Activated CD8-positive, alpha-beta T cell treated with anti-CD3 and anti-CD28 coated beads, Interleukin-2, amount 10 ng/mL, durations not matched to agents 7 days and 5 days (primary cell): ENCODE measurements at regions of chr19 and their contacts with region 1.

Region 1: DNA sequence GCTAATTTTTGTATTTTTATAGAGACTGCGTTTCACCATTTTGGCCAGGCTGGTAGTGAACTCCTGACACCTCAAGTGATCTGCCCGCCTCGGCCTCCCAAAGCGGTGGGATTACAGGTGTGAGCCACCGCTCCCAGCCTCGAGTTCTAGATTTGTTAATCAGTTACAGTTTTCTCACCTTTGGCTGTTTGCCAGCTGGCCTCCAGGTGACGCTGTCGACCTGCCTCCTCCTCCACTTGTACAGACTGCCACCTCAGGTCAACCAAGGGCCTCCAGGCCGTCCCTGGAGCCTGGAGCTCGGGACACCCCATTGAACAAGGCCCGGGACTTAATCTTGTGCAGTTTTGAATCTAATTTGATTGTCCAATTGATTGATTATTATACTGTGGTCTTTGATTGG is 45.5 kb downstream of the IER2 start:
- DNase-seq: peak; percentile 61
- ATAC-seq: peak; percentile 57
- H3K4me3 Mint-ChIP-seq: no peak overlapping the region
- H3K27ac Mint-ChIP-seq: no peak overlapping the region
- H3K4me1 Mint-ChIP-seq: peaks cover 29% of the 10 kb centered on the region
- H3K27me3 Mint-ChIP-seq: no peaks in the 10 kb centered on the region

Region 2: GRCh38 chr19:13155472-13156359 is 40.0 kb before region 1 on chr19:
- CTCF ChIA-PET with region 1: interaction called, 32 read pairs
- POLR2A ChIA-PET with region 1: interaction called, 6 read pairs
- DNase-seq: peak; percentile 86
- ATAC-seq: peak; percentile 10
- H3K4me3 Mint-ChIP-seq: peak overlapping the region; percentile 99
- H3K27ac Mint-ChIP-seq: peak overlapping the region; percentile 94
- H3K4me1 Mint-ChIP-seq: peaks cover 50% of the 10 kb centered on the region
- H3K27me3 Mint-ChIP-seq: peaks cover 2% of the 10 kb centered on the region

Region 3: DNA sequence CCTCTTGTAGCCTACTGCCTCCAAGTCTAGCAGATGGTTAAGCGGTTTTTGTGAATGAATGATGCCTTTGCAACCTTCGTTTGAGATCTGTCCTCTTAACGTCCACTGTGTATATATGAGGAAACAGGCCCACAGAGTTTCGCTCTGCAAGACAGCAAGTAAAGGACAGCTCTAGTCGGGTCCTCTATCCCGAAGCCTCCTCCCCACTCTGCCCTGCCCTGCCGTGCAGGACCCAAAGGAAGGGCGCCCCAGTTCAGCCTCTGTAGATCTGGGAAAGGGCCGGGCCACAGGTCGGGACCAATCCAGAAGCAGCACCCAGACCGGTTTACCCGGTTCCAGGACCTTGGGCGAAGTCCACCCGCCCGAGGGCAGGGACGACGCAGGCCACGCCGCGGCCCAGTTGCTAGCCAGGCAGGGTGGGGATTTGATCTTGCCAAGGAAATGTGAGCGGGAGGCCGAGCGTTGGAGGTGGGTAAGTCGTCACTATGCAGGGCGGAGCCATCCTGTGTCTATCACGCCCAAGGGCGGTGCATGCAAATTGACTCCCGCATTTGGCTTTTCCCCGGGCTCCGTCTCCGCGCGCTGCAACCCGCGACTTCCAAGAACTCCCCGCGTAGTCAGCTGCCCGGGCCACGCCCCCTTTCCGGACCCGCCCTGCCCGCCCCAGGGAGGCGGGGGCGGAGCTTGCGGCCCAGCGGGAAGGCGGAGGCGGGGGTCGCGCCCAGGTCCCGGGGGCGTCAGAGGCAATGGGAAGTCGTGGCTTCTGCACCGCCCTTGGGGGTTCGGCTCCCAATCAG is 33.0 kb before region 1 on chr19:
- CTCF ChIA-PET with region 1: interaction called, 32 read pairs
- POLR2A ChIA-PET with region 1: interaction called, 4 read pairs
- DNase-seq: peak; percentile 96
- ATAC-seq: peak; percentile 67
- H3K4me3 Mint-ChIP-seq: peak overlapping the region; percentile 88
- H3K27ac Mint-ChIP-seq: peak overlapping the region; percentile 89
- H3K4me1 Mint-ChIP-seq: peaks cover 75% of the 10 kb centered on the region
- H3K27me3 Mint-ChIP-seq: no peaks in the 10 kb centered on the region

Region 4: GRCh38 chr19:13172068-13172896 is 23.4 kb before region 1 on chr19:
- CTCF ChIA-PET with region 1: interaction called, 28 read pairs
- POLR2A ChIA-PET with region 1: interaction called, 4 read pairs
- DNase-seq: peak; percentile 73
- ATAC-seq: peak; percentile 14
- H3K4me3 Mint-ChIP-seq: peak overlapping the region; percentile 82
- H3K27ac Mint-ChIP-seq: peak overlapping the region; percentile 97
- H3K4me1 Mint-ChIP-seq: peaks cover 69% of the 10 kb centered on the region
- H3K27me3 Mint-ChIP-seq: no peaks in the 10 kb centered on the region

Region 5: GRCh38 chr19:13181747-13182388 is 13.8 kb before region 1 on chr19:
- CTCF ChIA-PET with region 1: interaction called, 21 read pairs
- POLR2A ChIA-PET with region 1: no interaction called
- DNase-seq: peak; percentile 41
- ATAC-seq: peak; percentile 42
- H3K4me3 Mint-ChIP-seq: no peak overlapping the region
- H3K27ac Mint-ChIP-seq: peak overlapping the region; percentile 79
- H3K4me1 Mint-ChIP-seq: peaks cover 30% of the 10 kb centered on the region
- H3K27me3 Mint-ChIP-seq: no peaks in the 10 kb centered on the region

Region 6: DNA sequence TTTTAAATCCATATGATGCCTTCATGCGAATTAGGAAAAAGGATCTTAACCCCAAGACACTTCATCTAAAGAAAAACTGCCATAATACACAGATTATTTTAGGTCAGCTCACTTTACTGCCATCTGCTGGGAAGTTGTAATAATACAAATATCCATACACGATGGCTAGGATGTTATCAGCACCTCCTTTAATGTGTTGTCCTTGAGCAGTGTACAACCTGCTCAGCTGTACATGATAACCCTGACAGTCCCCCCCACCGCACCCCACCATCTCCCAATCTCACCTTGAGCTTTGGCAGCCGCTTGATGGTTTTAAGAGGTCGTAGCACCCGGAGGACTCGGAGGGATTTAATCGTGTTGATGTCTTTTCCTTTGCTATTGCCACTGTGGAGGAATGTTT is 66.8 kb after region 1 on chr19:
- CTCF ChIA-PET with region 1: interaction called, 38 read pairs
- POLR2A ChIA-PET with region 1: no interaction called
- DNase-seq: no peak
- ATAC-seq: peak; percentile 57
- H3K4me3 Mint-ChIP-seq: no peak overlapping the region
- H3K27ac Mint-ChIP-seq: no peak overlapping the region
- H3K4me1 Mint-ChIP-seq: peaks cover 16% of the 10 kb centered on the region
- H3K27me3 Mint-ChIP-seq: peaks cover 15% of the 10 kb centered on the region